Vagina (tissue), 2 donors: ENCODE measurements at regions of chr3 and their contacts with region 1.

Region 1: GRCh38 chr3:10026084-10026890 is at the start of gene FANCD2:
- DNase-seq: no peak
- H3K4me3 ChIP-seq: peak within 1 kb of the TSS; percentile 68 to 83
- H3K27ac ChIP-seq: peak within 1 kb of the TSS; percentile 71
- H3K4me1 ChIP-seq: peaks cover 26% of the 10 kb centered on the region
- H3K27me3 ChIP-seq: no peaks in the 10 kb centered on the region
- CTCF ChIP-seq: no peak
- POLR2A ChIP-seq: peak in 1 of 2 donors; percentile 42
- total RNA-seq, gene FANCD2: 4.4 TPM

Region 2: DNA sequence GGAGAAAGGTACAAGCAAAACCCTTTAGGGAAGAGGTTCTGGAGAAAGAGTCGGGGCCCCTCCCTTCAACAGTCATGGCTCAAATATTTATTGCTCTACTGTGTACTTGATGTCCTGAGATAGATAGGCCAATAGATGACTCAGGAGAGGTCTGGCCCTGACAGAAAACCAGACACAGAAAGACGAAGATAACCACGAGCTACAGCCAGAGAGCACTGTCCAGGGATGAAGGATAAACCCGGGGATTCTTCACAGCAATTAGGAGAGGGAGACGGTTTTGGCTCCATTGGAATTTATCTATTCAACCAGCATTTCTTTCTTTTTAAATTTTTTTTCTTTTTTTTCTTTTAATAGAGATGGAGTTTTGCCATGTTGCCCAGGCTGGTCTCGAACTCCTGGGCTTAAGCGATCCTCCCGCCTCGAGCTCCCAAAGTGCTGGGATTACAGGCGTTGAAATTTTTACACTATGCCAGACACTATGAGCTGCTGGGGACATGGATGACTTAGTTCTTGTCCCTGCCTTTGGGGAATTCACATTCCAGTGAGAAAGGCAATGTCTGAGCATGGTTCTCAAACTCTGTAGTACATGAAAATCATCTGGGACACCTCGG is 141.6 kb before region 1 on chr3:
- intact Hi-C with region 1: no loop called
- DNase-seq: no peak
- H3K4me3 ChIP-seq: no peak overlapping the region
- H3K27ac ChIP-seq: peak overlapping the region; percentile 72
- H3K4me1 ChIP-seq: peaks cover 30% of the 10 kb centered on the region
- H3K27me3 ChIP-seq: no peaks in the 10 kb centered on the region
- CTCF ChIP-seq: no peak
- POLR2A ChIP-seq: no peak

Region 3: DNA sequence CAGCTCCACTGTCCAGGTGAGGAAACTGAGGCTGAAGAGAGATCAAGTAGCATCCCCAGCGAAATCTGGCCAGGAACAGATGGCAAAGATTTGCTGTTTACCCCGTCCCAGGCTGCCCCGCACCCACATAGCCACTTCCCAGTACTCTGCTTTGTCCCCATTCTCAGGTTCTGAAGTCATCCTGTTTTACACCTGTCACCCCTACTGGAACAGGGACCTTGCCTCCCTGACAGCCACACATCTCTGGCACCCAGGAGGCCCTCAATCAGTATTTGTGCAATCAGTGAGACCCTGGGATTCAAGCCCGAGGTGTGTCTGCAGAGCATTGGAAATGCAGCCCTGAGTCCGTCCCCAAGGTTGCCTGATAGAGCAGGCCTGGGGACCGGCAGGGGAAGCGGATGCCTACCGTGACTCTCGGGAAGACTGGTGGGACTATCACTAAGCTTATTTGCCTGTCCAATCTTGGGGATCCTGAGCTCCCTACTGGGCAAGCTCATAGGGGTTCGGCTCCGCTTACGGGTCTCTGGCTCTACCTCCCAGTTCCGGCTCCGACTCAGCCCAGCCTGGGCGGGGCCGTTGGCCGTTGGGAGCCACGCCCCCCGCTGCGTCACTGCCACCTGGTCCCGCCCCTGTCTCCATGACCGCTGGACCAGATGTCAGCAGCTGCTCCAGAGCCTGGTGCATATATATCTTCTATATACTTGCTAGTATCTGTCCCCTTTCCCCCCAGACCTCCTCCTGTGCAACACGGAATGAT is 17.5 kb before region 1 on chr3:
- intact Hi-C with region 1: loop called (anchors 2 kb)
- DNase-seq: peak; percentile 92 to 96
- H3K4me3 ChIP-seq: peak overlapping the region; percentile 51 to 58
- H3K27ac ChIP-seq: peak overlapping the region; percentile 45
- H3K4me1 ChIP-seq: peaks cover 31% of the 10 kb centered on the region
- H3K27me3 ChIP-seq: no peaks in the 10 kb centered on the region
- CTCF ChIP-seq: no peak
- POLR2A ChIP-seq: no peak

Region 4: GRCh38 chr3:10115326-10116137 is 89.2 kb after region 1 on chr3 and contains the start of gene BRK1:
- intact Hi-C with region 1: loop called (anchors 10 kb)
- DNase-seq: peak in 1 of 2 donors; percentile 95
- H3K4me3 ChIP-seq: peak within 1 kb of the TSS; percentile 76 to 94
- H3K27ac ChIP-seq: peak within 1 kb of the TSS; percentile 80
- H3K4me1 ChIP-seq: peaks cover 33% of the 10 kb centered on the region
- H3K27me3 ChIP-seq: no peaks in the 10 kb centered on the region
- CTCF ChIP-seq: no peak
- POLR2A ChIP-seq: peak in 1 of 2 donors; percentile 55
- total RNA-seq, gene BRK1: 94.5 TPM